A673 (cell line): ENCODE measurements at regions of chr17 and their contacts with region 1.

Region 1: DNA sequence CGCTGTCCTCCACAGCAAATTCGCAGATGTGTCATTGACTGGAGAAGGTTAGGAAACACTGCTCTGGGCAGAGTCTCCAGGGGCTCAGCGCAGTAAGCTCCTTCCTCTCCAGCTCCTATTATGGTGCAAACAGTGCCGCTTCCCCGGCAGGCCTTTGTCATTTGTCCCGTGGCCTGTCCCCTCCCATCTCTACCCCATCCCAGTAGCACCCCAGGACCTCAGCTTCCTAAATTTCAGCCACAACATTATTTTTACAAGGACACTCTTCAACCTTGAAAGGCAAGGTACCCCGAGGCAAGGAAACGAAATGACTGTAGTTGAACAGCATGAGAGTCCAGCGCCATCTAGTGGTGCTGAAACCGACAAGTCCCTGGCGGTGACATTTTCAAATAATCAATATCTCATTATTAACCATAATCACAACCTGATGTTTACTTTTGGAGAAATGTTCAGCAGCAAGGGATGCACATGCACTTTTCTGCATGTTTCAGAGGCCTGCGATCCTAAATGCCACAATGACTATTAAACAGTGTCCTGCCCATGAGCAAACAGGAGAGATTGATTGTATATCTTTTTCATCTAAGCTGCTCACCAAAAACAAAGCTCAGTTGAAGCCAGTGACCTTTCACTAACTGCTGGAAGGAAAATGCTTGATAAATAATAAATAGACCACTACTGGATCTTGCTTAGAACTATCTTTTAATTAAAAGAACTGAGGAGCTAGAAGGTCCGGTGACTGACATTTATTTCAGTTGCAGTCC is 16.5 kb downstream of the MRPS23 start:
- DNase-seq: peak; percentile 84
- H3K4me3 ChIP-seq: peak overlapping the region; percentile 39
- H3K27ac ChIP-seq: no peak overlapping the region
- H3K4me1 ChIP-seq: peaks cover 10% of the 10 kb centered on the region
- H3K27me3 ChIP-seq: no peaks in the 10 kb centered on the region
- CTCF ChIP-seq: peak; percentile 99

Region 2: DNA sequence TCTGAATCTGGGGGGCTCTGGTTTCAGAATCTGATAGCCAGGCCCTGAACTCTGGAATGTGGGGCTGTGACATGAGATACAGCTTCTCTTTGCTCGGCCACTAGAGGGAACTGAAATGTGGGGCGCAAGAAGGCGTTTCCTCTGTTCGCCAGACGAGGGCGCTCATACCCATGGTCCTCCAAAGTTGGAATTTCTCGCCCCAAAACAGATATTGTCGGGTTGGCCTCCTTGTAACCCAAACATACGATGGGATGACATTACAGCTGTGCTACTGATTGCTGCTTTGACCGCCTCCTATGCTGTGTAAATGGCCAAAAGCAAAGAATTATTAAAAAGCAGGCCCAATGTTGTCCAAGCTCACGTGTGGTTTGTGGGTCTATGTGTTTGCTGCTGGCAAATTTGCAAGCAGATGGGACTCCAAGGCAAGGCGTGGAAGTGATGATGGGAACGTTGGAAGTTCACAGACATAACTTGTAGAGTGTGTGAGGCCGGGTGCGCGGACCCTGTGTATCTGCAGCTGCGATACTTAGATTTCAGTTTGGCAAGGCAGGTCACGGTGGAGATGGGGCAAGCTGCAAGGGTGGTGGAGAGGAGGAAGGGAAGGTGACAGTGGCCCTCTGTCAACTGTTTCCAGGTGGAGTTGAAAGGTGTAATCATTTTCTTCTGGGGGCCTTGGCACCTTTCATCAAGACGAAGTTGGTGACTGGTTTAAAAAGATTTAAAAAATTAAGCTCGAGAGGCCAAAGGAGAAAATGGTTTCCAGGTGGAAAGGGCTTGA is 590.0 kb before region 1 on chr17:
- CTCF ChIA-PET with region 1: interaction called, 10 read pairs
- POLR2A ChIA-PET with region 1: no interaction called
- intact Hi-C with region 1: loop called (anchors 1 kb)
- DNase-seq: peak; percentile 79
- H3K4me3 ChIP-seq: no peak overlapping the region
- H3K27ac ChIP-seq: no peak overlapping the region
- H3K4me1 ChIP-seq: peaks cover 6% of the 10 kb centered on the region
- H3K27me3 ChIP-seq: no peaks in the 10 kb centered on the region
- CTCF ChIP-seq: peak; percentile 100

Region 3: DNA sequence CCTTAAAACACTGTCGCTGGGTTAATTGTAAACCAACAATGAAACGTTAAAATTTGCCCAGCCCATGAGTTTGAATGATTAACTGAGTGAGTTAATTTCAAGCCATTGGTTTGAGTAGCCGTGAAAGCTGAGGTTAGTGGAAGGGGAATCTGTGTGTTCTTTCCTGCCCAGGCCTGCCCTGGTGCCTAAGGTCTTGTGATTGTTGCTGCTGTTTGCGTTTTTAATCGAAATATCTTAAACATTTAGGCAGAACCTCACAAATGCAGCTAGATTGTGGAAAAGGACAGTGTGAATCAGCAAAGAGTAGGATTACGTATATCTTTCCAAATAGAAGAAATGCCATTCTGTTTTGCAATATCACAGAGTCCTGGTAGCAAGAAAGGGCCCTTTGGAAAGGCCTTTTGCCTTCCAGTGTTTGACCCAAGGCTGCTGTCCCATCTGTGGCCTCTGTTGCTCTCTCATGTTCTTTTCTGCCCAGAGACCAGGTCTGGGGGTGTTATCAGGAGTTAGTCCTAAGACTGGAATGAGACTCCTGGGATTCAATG is 463.2 kb before region 1 on chr17:
- CTCF ChIA-PET with region 1: no interaction called
- POLR2A ChIA-PET with region 1: no interaction called
- intact Hi-C with region 1: no loop called
- DNase-seq: no peak
- H3K4me3 ChIP-seq: no peak overlapping the region
- H3K27ac ChIP-seq: no peak overlapping the region
- H3K4me1 ChIP-seq: peaks cover 19% of the 10 kb centered on the region
- H3K27me3 ChIP-seq: no peaks in the 10 kb centered on the region
- CTCF ChIP-seq: no peak

Region 4: DNA sequence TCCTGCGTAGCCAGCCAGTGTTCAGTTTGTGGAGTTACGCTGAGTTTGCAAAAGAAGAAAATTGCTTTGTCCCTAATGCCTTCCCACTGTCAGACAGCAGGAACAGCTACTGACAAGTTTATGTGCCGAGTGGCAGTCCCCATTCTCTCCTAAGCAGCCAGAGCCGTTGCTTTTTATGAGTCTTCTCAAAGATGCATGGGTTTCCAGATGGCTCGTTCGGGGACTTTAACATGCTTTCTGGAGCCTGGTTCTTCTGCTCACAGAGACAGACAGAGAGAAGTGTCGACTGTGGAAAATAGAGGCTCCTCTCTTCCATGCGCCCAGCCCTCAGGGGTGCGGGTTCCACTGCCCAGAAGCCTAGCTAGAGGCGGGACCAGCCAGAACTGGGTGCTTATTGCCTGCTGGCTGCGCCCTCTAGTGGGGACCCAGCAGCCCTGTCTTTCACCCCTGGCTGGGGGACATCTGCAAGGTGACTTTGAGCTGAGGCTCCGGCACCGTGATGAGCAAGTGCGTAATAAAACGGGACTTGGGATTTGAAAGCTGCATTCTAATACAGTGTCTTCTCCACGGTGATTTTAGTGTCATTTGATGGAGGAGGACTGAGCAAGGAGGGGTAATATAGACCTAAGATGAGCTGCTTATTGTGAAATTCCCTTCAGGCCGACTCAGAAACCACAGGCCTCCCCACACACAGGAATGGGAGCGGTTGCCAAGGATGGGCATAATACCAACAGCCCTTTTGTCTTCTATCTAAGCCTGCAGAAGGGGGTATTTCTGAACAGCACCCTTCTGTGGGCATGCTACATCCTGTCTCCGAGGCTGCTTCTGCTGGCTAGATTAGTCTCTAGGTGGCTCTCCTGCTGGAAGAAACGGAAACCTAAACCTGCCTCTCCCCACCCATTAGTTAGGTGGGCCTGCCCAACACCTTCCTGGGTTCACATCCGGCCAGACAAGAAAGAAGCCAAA is 161.4 kb before region 1 on chr17:
- CTCF ChIA-PET with region 1: interaction called, 13 read pairs
- POLR2A ChIA-PET with region 1: no interaction called
- intact Hi-C with region 1: no loop called
- DNase-seq: peak; percentile 82
- H3K4me3 ChIP-seq: no peak overlapping the region
- H3K27ac ChIP-seq: no peak overlapping the region
- H3K4me1 ChIP-seq: peaks cover 5% of the 10 kb centered on the region
- H3K27me3 ChIP-seq: no peaks in the 10 kb centered on the region
- CTCF ChIP-seq: peak; percentile 98

Region 5: GRCh38 chr17:57783106-57783742 is 50.1 kb before region 1 on chr17:
- CTCF ChIA-PET with region 1: interaction called, 29 read pairs
- POLR2A ChIA-PET with region 1: no interaction called
- intact Hi-C with region 1: no loop called
- DNase-seq: peak; percentile 92
- H3K4me3 ChIP-seq: no peak overlapping the region
- H3K27ac ChIP-seq: peak overlapping the region; percentile 52
- H3K4me1 ChIP-seq: peaks cover 51% of the 10 kb centered on the region
- H3K27me3 ChIP-seq: no peaks in the 10 kb centered on the region
- CTCF ChIP-seq: peak; percentile 99